Activated naive CD4-positive, alpha-beta T cell treated with anti-CD3 and anti-CD28 coated beads for 36 hours (primary cell): ENCODE measurements at regions of chr22 and their contacts with region 1.

Region 1: GRCh38 chr22:40679964-40680818 is 907 bp downstream of the MCHR1 start:
- DNase-seq: no peak
- H3K4me3 Mint-ChIP-seq: no peak overlapping the region
- H3K27ac Mint-ChIP-seq: no peak overlapping the region
- H3K4me1 Mint-ChIP-seq: peaks cover 34% of the 10 kb centered on the region
- H3K27me3 Mint-ChIP-seq: peaks cover 16% of the 10 kb centered on the region

Region 2: DNA sequence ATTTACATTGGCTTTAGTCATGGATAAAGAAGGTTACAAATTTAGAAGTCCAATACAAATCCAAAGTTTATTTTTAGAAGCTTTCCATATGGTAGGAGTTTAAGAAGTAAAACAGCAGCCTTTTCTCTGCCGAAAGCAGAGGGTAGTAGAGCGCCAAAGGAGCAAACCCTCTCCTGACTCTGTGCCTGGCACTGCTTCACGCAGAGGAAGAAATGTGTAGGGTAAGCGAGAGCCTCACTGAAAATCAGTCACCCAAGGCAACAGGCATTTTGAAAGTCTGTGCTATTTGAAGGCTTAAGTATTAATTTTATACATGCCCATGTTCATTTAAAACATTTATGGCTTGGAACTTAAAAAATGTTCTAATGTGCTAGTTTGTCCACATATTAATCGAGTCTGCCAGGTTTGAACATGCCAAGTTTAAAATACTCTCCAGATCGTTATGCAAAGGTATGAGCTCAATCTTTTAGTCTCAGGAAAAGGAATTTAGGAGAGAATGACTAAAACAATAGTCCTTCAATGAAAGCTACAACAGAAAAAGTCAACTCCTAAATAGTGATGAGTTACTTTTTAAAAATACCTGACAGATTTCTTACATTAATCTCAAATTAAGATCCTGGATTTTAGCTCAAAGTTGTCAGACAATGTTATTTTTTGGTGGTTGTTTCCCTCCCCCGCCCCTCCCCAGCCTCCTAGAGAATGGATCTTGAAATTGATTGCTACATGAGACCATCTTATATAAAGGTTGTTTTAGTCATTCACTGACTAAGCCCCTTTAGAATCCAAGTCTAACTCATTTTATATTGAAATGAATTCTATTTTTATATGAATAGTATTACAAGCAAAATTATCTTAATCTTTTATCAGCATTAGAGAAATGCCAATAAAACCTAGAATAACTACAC is 82.4 kb before region 1 on chr22:
- CTCF ChIA-PET with region 1: no interaction called
- intact Hi-C with region 1: no loop called
- DNase-seq: no peak
- H3K4me3 Mint-ChIP-seq: no peak overlapping the region
- H3K27ac Mint-ChIP-seq: no peak overlapping the region
- H3K4me1 Mint-ChIP-seq: peaks cover 50% of the 10 kb centered on the region
- H3K27me3 Mint-ChIP-seq: no peaks in the 10 kb centered on the region

Region 3: GRCh38 chr22:40668611-40669411 is 11.4 kb before region 1 on chr22:
- CTCF ChIA-PET with region 1: interaction called, 4 read pairs
- intact Hi-C with region 1: loop called (anchors 1 kb)
- DNase-seq: peak; percentile 50
- H3K4me3 Mint-ChIP-seq: peak overlapping the region; percentile 33
- H3K27ac Mint-ChIP-seq: peak overlapping the region; percentile 88
- H3K4me1 Mint-ChIP-seq: peaks cover 22% of the 10 kb centered on the region
- H3K27me3 Mint-ChIP-seq: no peaks in the 10 kb centered on the region

Region 4: GRCh38 chr22:40728731-40729189 is 48.6 kb after region 1 on chr22:
- CTCF ChIA-PET with region 1: interaction called, 8 read pairs
- intact Hi-C with region 1: loop called (anchors 1 kb)
- DNase-seq: peak; percentile 80
- H3K4me3 Mint-ChIP-seq: peak overlapping the region; percentile 63
- H3K27ac Mint-ChIP-seq: peak overlapping the region; percentile 82
- H3K4me1 Mint-ChIP-seq: peaks cover 45% of the 10 kb centered on the region
- H3K27me3 Mint-ChIP-seq: no peaks in the 10 kb centered on the region

Region 5: DNA sequence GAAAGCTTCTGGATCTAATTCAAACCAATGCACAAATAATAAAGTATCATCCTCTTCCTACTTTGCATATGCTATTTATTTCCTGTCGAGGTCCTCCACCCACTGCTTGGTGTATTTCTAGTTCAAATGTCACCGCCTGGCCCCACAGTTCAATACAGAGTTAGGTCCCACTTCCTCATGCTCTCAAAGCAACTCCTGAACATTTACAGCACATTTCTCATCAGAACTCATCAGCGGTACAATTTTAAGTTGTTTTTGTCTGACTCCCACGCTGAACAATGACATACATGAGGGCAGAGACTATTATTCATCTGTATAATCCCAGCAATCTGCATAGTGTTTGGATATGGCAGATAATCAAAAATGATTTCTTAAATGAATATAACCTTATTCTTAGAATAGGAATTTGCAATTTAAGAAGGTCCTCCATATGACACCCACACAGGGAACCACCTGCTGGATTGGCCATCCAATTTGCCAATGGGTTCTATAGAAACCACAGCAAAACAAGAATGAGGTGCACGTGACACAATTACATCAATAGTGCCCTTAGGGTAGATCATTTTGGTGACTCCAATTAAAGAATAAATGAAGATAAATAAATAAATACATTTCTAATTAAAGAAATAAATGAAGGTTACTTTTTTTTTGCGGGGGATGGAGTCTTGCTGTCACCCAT is 84.7 kb after region 1 on chr22:
- CTCF ChIA-PET with region 1: interaction called, 60 read pairs
- intact Hi-C with region 1: loop called (anchors 1 kb)
- DNase-seq: peak; percentile 48
- H3K4me3 Mint-ChIP-seq: no peak overlapping the region
- H3K27ac Mint-ChIP-seq: peak overlapping the region; percentile 82
- H3K4me1 Mint-ChIP-seq: peaks cover 22% of the 10 kb centered on the region
- H3K27me3 Mint-ChIP-seq: no peaks in the 10 kb centered on the region

Region 6: DNA sequence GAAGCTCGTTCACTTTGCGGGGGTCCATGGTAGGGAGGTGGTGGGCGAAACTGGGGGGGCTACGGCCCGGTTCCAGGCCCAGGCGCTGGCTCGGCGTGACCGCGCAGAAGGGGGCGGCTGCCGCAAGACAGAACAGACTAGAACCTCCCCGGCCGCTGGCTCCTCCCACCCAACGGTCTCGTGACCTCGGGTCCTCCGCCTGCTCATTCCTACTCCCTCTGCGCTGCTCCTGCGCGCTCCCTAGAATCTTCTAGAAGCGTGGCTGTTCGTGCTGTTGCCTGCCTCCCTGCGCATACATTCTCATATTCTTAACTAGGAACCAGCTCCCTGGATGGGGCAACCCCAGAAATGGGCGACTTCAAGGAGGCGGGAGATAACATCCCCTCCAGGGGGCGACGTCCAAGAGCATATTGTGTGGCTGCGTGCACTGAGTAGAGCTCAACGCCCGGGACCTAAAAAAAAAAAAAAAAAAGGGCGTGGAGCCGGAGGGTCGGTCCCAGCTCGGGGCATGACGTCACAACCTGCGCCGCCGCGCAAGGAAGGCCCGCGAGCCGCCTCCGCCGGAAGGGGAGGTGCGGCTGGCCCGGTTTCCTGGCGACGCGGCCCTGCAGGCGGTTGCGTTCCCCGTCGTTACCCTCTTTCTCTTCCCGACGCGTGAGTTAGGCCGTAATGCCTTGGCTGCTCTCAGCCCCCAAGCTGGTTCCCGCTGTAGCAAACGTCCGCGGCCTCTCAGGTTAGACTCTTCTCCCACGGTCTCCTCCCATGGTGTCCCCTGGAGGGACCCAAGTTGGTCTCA is 176.5 kb after region 1 on chr22 and contains the starts of genes ST13 and XPNPEP3:
- CTCF ChIA-PET with region 1: interaction called, 6 read pairs
- intact Hi-C with region 1: loop called (anchors 1 kb)
- DNase-seq: peak; percentile 98
- H3K4me3 Mint-ChIP-seq: peak within 1 kb of the TSS; percentile 95
- H3K27ac Mint-ChIP-seq: peak within 1 kb of the TSS; percentile 99
- H3K4me1 Mint-ChIP-seq: peaks cover 51% of the 10 kb centered on the region
- H3K27me3 Mint-ChIP-seq: no peaks in the 10 kb centered on the region
- total RNA-seq, gene ST13: 240 to 254 TPM
- total RNA-seq, gene XPNPEP3: 15.7 to 19.6 TPM

Region 7: GRCh38 chr22:41022470-41023298 is 342.5 kb after region 1 on chr22:
- CTCF ChIA-PET with region 1: no interaction called
- intact Hi-C with region 1: loop called (anchors 5 kb)
- DNase-seq: peak; percentile 88
- H3K4me3 Mint-ChIP-seq: peak overlapping the region; percentile 80
- H3K27ac Mint-ChIP-seq: peak overlapping the region; percentile 61
- H3K4me1 Mint-ChIP-seq: peaks cover 16% of the 10 kb centered on the region
- H3K27me3 Mint-ChIP-seq: no peaks in the 10 kb centered on the region